ENCODE measurements at regions of chr6 and their contacts with region 1.

Region 1: GRCh38 chr6:26025894-26026832 is 61.1 kb upstream of the HFE start:
- DNase-seq: peak; percentile 93 to 97 (median 96)
- ATAC-seq: peak; percentile 72 to 75 (median 74)
- H3K4me3 ChIP-seq: peak overlapping the region; percentile 35 to 87 (median 68)
- H3K27ac ChIP-seq: peak overlapping the region; percentile 84 to 98 (median 94)
- H3K4me1 ChIP-seq: peaks cover 0 to 36% (median 19%) of the 10 kb centered on the region in 12 donors
- H3K27me3 ChIP-seq: no peaks in the 10 kb centered on the region
- CTCF ChIP-seq: peak; percentile 64 to 93 (median 84)
- POLR2A ChIP-seq: peak in 1 of 2 donors; percentile 44

Region 2: DNA sequence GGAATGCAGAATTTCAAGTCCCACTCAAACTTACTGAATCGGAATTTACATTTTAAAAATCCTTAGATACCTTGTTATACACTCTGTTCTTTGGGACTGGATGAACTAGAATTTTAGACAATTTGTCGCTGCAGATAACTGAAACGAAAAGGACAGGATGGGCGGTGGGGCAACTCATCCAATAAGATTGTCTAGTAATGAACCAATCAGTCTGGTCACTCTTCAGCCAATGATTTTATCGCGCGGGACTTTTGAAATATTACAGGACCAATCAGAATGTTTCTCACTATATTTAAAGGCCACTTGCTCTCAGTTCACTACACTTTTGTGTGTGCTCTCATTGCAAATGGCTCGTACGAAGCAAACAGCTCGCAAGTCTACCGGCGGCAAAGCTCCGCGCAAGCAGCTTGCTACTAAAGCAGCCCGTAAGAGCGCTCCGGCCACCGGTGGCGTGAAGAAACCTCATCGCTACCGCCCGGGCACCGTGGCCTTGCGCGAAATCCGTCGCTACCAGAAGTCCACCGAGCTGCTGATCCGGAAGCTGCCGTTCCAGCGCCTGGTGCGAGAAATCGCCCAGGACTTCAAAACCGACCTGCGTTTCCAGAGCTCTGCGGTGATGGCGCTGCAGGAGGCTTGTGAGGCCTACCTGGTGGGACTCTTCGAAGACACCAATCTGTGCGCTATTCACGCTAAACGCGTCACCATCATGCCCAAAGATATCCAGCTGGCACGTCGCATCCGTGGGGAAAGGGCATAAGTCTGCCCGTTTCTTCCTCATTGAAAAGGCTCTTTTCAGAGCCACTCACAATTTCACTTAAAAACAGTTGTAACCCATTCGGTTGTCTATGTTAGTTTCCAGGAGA is 19.1 kb after region 1 on chr6:
- intact Hi-C with region 1: loop called in 1 of 10 experiments (anchors 2 kb)
- DNase-seq: peak; percentile 66 to 90 (median 81)
- ATAC-seq: peak; percentile 78 to 83 (median 80)
- H3K4me3 ChIP-seq: peak overlapping the region; percentile 24 to 68 (median 56)
- H3K27ac ChIP-seq: peak overlapping the region; percentile 67 to 97 (median 92)
- H3K4me1 ChIP-seq: peaks cover 0 to 23% (median 12%) of the 10 kb centered on the region in 12 donors
- H3K27me3 ChIP-seq: no peaks in the 10 kb centered on the region
- CTCF ChIP-seq: no peak
- POLR2A ChIP-seq: peak; percentile 5 to 45

Region 3: GRCh38 chr6:26086211-26086610 is 60.0 kb after region 1 on chr6:
- intact Hi-C with region 1: no loop called
- DNase-seq: no peak
- ATAC-seq: no peak
- H3K4me3 ChIP-seq: no peak overlapping the region
- H3K27ac ChIP-seq: no peak overlapping the region
- H3K4me1 ChIP-seq: peaks cover 0 to 31% (median 18%) of the 10 kb centered on the region in 12 donors
- H3K27me3 ChIP-seq: no peaks in the 10 kb centered on the region
- CTCF ChIP-seq: no peak
- POLR2A ChIP-seq: no peak

Region 4: GRCh38 chr6:26097268-26097875 is 71.2 kb after region 1 on chr6:
- intact Hi-C with region 1: no loop called
- DNase-seq: peak in 4 of 5 donors; percentile 43 to 58 (median 50)
- ATAC-seq: peak; percentile 56 to 87 (median 86)
- H3K4me3 ChIP-seq: no peak overlapping the region
- H3K27ac ChIP-seq: no peak overlapping the region
- H3K4me1 ChIP-seq: peaks cover 0 to 16% (median 0%) of the 10 kb centered on the region in 12 donors
- H3K27me3 ChIP-seq: no peaks in the 10 kb centered on the region
- CTCF ChIP-seq: peak; percentile 69 to 85 (median 78)
- POLR2A ChIP-seq: no peak

Region 5: GRCh38 chr6:26196846-26197648 is 170.9 kb after region 1 on chr6:
- intact Hi-C with region 1: loop called in 6 of 10 experiments (anchors 5 to 10 kb)
- DNase-seq: peak; percentile 75 to 82 (median 79)
- ATAC-seq: peak; percentile 37 to 79 (median 66)
- H3K4me3 ChIP-seq: peak overlapping the region; percentile 15 to 77 (median 69)
- H3K27ac ChIP-seq: peak overlapping the region in 11 of 12 donors; percentile 60 to 96 (median 84)
- H3K4me1 ChIP-seq: peaks cover 0 to 46% (median 20%) of the 10 kb centered on the region in 12 donors
- H3K27me3 ChIP-seq: peaks cover 0 to 18% (median 0%) of the 10 kb centered on the region in 9 donors
- CTCF ChIP-seq: no peak
- POLR2A ChIP-seq: peak in 1 of 2 donors; percentile 82

Region 6: GRCh38 chr6:26270903-26271667 is 244.9 kb after region 1 on chr6:
- intact Hi-C with region 1: loop called in 1 of 10 experiments (anchors 10 kb)
- DNase-seq: peak in 4 of 5 donors; percentile 33 to 67 (median 62)
- ATAC-seq: peak in 3 of 4 donors; percentile 50 to 65 (median 59)
- H3K4me3 ChIP-seq: peak overlapping the region in 11 of 12 donors; percentile 10 to 66 (median 52)
- H3K27ac ChIP-seq: peak overlapping the region in 10 of 12 donors; percentile 14 to 84 (median 72)
- H3K4me1 ChIP-seq: peaks cover 0 to 28% (median 12%) of the 10 kb centered on the region in 12 donors
- H3K27me3 ChIP-seq: peaks cover 0 to 75% (median 24%) of the 10 kb centered on the region in 9 donors
- CTCF ChIP-seq: no peak
- POLR2A ChIP-seq: no peak

Region 7: GRCh38 chr6:26537846-26538571 is 511.8 kb after region 1 on chr6 and contains the start of gene HMGN4:
- intact Hi-C with region 1: loop called in 1 of 10 experiments (anchors 10 kb)
- DNase-seq: peak; percentile 82 to 91 (median 87)
- ATAC-seq: peak; percentile 86 to 90 (median 90)
- H3K4me3 ChIP-seq: peak within 1 kb of the TSS; percentile 58 to 94 (median 76)
- H3K27ac ChIP-seq: peak within 1 kb of the TSS; percentile 75 to 96 (median 92)
- H3K4me1 ChIP-seq: peaks cover 0 to 48% (median 25%) of the 10 kb centered on the region in 12 donors
- H3K27me3 ChIP-seq: no peaks in the 10 kb centered on the region
- CTCF ChIP-seq: peak in 3 of 12 donors; percentile 19 to 40 (median 30)
- POLR2A ChIP-seq: peak in 1 of 2 donors; percentile 56
- total RNA-seq, gene HMGN4: 22.4 to 34.7 (median 32.1) TPM

Region 8: DNA sequence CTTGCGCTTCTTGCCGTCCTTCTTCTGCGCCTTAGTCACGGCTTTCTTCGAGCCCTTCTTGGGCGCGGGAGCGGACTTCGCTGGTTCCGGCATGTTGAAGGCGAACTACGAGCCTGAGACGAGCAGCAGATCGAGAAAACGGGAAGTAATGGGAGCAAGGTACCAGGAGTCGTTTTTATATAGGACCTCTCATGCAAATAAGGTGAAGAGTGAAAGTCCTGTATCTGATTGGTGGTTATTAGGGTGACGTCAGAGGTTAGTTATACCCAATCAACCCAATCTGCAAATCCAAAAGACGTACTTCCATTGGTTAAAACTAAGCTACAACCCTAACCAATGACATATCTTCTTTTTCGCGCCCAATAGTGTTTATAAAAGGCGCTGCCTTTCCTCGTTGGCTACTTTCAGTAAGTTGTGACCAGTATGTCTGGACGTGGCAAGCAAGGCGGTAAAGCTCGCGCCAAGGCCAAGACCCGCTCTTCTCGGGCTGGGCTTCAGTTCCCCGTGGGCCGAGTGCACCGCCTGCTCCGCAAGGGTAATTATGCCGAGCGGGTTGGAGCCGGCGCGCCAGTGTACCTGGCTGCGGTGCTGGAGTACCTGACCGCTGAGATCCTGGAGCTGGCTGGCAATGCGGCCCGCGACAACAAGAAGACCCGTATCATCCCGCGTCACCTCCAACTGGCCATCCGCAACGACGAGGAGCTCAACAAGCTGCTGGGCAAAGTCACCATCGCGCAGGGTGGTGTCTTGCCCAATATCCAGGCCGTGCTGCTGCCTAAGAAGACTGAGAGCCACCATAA is 1120.7 kb after region 1 on chr6:
- intact Hi-C with region 1: loop called in 2 of 10 experiments (anchors 2 to 10 kb)
- DNase-seq: peak; percentile 73 to 84 (median 79)
- ATAC-seq: peak; percentile 95 to 98 (median 96)
- H3K4me3 ChIP-seq: peak overlapping the region; percentile 30 to 79 (median 65)
- H3K27ac ChIP-seq: peak overlapping the region; percentile 77 to 98 (median 90)
- H3K4me1 ChIP-seq: peaks cover 0 to 37% (median 11%) of the 10 kb centered on the region in 12 donors
- H3K27me3 ChIP-seq: no peaks in the 10 kb centered on the region
- CTCF ChIP-seq: no peak
- POLR2A ChIP-seq: peak; percentile 15 to 96

Region 9: DNA sequence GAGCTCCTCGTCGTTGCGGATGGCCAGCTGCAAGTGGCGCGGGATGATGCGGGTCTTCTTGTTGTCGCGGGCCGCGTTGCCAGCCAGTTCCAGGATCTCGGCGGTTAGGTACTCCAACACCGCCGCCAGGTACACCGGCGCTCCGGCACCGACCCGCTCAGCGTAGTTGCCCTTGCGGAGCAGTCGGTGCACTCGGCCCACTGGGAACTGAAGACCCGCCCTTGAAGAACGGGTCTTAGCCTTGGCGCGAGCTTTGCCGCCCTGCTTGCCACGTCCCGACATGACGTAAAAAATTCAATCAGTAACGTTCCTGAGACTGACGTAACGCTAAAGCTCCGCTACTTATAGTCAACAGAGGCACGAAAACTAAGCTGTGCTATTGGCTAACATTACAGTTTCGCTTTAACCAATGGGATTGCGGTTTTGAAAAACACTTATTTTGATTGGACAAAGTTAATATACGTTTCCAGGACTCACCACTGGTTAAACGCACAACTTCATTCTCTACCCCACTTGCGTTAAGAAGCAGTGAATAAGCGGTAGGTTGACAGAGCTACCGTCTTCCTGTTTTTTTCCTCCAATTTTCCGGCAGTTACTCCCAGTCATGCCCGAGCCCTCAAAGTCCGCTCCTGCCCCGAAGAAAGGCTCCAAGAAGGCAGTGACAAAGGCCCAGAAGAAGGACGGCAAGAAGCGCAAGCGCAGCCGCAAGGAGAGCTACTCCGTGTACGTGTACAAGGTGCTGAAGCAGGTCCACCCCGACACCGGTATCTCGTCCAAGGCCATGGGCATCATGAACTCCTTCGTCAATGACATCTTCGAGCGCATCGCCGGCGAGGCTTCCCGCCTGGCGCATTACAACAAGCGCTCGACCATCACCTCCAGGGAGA is 1812.1 kb after region 1 on chr6:
- intact Hi-C with region 1: loop called in 2 of 10 experiments (anchors 10 kb)
- DNase-seq: peak; percentile 74 to 85 (median 76)
- ATAC-seq: peak; percentile 93 to 95 (median 95)
- H3K4me3 ChIP-seq: peak overlapping the region; percentile 62 to 87 (median 76)
- H3K27ac ChIP-seq: peak overlapping the region; percentile 88 to 98 (median 95)
- H3K4me1 ChIP-seq: peaks cover 0 to 33% (median 20%) of the 10 kb centered on the region in 12 donors
- H3K27me3 ChIP-seq: no peaks in the 10 kb centered on the region
- CTCF ChIP-seq: peak in 1 of 12 donors; percentile 11
- POLR2A ChIP-seq: peak; percentile 4 to 90

Measured in heart left ventricle (tissue), 16 donors.